ENCODE measurements at regions of chr14 and their contacts with region 1.

Region 1: GRCh38 chr14:68862954-68863594 is 70.2 kb upstream of the ZFP36L1 start:
- DNase-seq: peak; percentile 79 to 85
- ATAC-seq: peak; percentile 79 to 85
- H3K4me3 ChIP-seq: no peak overlapping the region
- H3K27ac ChIP-seq: peak overlapping the region; percentile 41 to 62; a peak in 3 of 6 replicates
- H3K4me1 ChIP-seq: no peaks in the 10 kb centered on the region
- CTCF ChIP-seq: peak; percentile 90
- EP300 ChIP-seq: no peak
- POLR2A ChIP-seq: no peak
- RAD21 ChIP-seq: peak; percentile 94 to 95

Region 2: GRCh38 chr14:68843471-68844209 is 19.4 kb before region 1 on chr14:
- CTCF ChIA-PET with region 1: interaction called, 26 read pairs
- POLR2A ChIA-PET with region 1: no interaction called
- DNase-seq: peak; percentile 69 to 76
- ATAC-seq: peak; percentile 91 to 96
- H3K4me3 ChIP-seq: no peak overlapping the region; the same call in 2 of the 3 replicates
- H3K27ac ChIP-seq: peak overlapping the region; percentile 35 to 83
- H3K4me1 ChIP-seq: 0 out of 3 replicates have a peak, but pooled peaks cover 4% of the 10 kb centered on the region
- CTCF ChIP-seq: peak; percentile 96
- EP300 ChIP-seq: no peak
- POLR2A ChIP-seq: no peak
- RAD21 ChIP-seq: peak; percentile 83 to 87

Region 3: GRCh38 chr14:68896132-68896531 is 33.1 kb after region 1 on chr14:
- CTCF ChIA-PET with region 1: interaction called, 17 read pairs
- POLR2A ChIA-PET with region 1: no interaction called
- DNase-seq: no peak
- ATAC-seq: peak in 1 of 2 experiments; percentile 40; a peak in 2 of 6 replicates
- H3K4me3 ChIP-seq: no peak overlapping the region
- H3K27ac ChIP-seq: no peak overlapping the region
- H3K4me1 ChIP-seq: 0 out of 3 replicates have a peak, but pooled peaks cover 4% of the 10 kb centered on the region
- CTCF ChIP-seq: peak; percentile 19; the same call in 1 of the 3 replicates
- EP300 ChIP-seq: no peak
- POLR2A ChIP-seq: no peak
- RAD21 ChIP-seq: no peak

Region 4: GRCh38 chr14:68926236-68926635 is 63.2 kb after region 1 on chr14:
- CTCF ChIA-PET with region 1: interaction called, 10 read pairs
- POLR2A ChIA-PET with region 1: no interaction called
- DNase-seq: peak in 1 of 2 experiments; percentile 46
- ATAC-seq: no peak
- H3K4me3 ChIP-seq: no peak overlapping the region
- H3K27ac ChIP-seq: no peak overlapping the region
- H3K4me1 ChIP-seq: peaks cover 26% of the 10 kb centered on the region
- CTCF ChIP-seq: peak; percentile 23; the same call in 2 of the 3 replicates
- EP300 ChIP-seq: no peak
- POLR2A ChIP-seq: no peak
- RAD21 ChIP-seq: no peak

Region 5: GRCh38 chr14:68951042-68951914 is 88.2 kb after region 1 on chr14:
- CTCF ChIA-PET with region 1: interaction called, 11 read pairs
- POLR2A ChIA-PET with region 1: no interaction called
- DNase-seq: peak; percentile 80 to 95
- ATAC-seq: peak; percentile 86 to 91
- H3K4me3 ChIP-seq: peak overlapping the region; percentile 18; the same call in 1 of the 3 replicates
- H3K27ac ChIP-seq: peak overlapping the region; percentile 98 to 99
- H3K4me1 ChIP-seq: peaks cover 100% of the 10 kb centered on the region
- CTCF ChIP-seq: no peak; the same call in 2 of the 3 replicates
- EP300 ChIP-seq: peak in 1 of 2 experiments; percentile 63; a peak in 3 of 5 replicates
- POLR2A ChIP-seq: no peak
- RAD21 ChIP-seq: peak in 1 of 2 experiments; percentile 42; a peak in 2 of 5 replicates